A673 (cell line): ENCODE measurements at regions of chr14 and their contacts with region 1.

Region 1: DNA sequence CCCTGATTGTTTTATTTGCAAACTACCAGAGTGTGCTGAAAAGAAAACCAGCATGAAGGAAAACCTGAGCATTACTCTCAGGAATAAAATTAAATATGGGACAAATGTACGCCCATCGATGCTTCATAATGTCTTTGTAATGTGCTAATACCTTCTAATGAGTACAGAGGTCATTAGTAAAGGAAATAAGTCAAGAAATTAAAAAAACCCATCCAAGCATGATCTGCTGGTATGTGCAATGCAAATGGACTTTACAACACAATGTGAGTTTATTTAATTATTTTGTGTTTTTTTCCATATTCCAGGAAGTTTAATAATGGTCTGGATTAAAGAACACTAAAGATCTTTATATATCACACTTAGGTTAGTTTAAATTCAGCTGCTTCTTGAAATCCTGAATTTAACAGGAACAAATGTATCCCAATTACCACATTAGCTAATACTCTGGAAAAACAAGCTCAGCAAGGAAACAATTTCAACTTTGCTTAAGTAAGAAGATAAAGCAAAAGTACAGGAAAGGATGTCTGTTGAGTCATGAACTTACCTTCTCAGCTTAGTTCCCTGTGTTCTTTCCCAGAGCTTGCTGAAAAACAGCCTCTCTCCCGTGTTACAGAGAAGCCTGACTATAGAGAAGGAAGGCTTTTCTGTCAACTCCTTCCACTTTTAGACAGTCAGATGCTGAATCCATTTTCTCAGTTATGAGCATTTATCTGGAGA is 179.3 kb upstream of the TMEM260 start:
- DNase-seq: no peak
- H3K4me3 ChIP-seq: no peak overlapping the region
- H3K27ac ChIP-seq: no peak overlapping the region
- H3K4me1 ChIP-seq: no peaks in the 10 kb centered on the region
- H3K27me3 ChIP-seq: no peaks in the 10 kb centered on the region
- CTCF ChIP-seq: no peak

Region 2: DNA sequence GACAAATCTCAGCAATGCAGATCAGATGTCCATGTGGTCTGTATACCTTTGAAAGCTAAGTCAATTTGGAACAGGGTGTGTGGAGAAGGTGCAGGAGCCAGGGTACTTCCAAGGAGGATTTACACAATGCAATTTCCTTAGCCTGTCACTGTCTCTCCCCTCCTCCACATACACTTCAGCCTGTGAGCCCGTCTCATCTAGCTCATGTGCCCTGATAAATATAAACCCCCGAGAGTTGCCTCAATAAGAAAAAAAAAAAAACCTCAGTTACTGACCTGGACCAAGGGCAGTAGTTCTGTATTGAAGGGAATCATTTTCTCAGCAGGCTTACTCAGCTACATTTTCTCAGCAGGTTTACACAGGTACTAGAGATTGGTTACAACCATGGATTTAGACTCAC is 414.2 kb before region 1 on chr14:
- CTCF ChIA-PET with region 1: no interaction called
- POLR2A ChIA-PET with region 1: interaction called, 14 read pairs
- intact Hi-C with region 1: no loop called
- DNase-seq: no peak
- H3K4me3 ChIP-seq: no peak overlapping the region
- H3K27ac ChIP-seq: no peak overlapping the region
- H3K4me1 ChIP-seq: no peaks in the 10 kb centered on the region
- H3K27me3 ChIP-seq: no peaks in the 10 kb centered on the region
- CTCF ChIP-seq: no peak

Region 3: GRCh38 chr14:56342494-56342942 is 57.7 kb before region 1 on chr14:
- CTCF ChIA-PET with region 1: no interaction called
- POLR2A ChIA-PET with region 1: no interaction called
- intact Hi-C with region 1: no loop called
- DNase-seq: no peak
- H3K4me3 ChIP-seq: no peak overlapping the region
- H3K27ac ChIP-seq: no peak overlapping the region
- H3K4me1 ChIP-seq: peaks cover 23% of the 10 kb centered on the region
- H3K27me3 ChIP-seq: no peaks in the 10 kb centered on the region
- CTCF ChIP-seq: no peak